Activated CD4-positive, alpha-beta T cell treated with anti-CD3 and anti-CD28 coated beads, Interleukin-2, amount 10 ng/mL, durations not matched to agents 24 days and 14 days (primary cell): ENCODE measurements at regions of chr2 and their contacts with region 1.

Region 1: GRCh38 chr2:65064728-65065552 is 8.7 kb downstream of the CEP68 start:
- DNase-seq: peak; percentile 87
- H3K4me3 Mint-ChIP-seq: no peak overlapping the region
- H3K27ac Mint-ChIP-seq: peak overlapping the region; percentile 16
- H3K4me1 Mint-ChIP-seq: peaks cover 22% of the 10 kb centered on the region
- H3K27me3 Mint-ChIP-seq: no peaks in the 10 kb centered on the region

Region 2: DNA sequence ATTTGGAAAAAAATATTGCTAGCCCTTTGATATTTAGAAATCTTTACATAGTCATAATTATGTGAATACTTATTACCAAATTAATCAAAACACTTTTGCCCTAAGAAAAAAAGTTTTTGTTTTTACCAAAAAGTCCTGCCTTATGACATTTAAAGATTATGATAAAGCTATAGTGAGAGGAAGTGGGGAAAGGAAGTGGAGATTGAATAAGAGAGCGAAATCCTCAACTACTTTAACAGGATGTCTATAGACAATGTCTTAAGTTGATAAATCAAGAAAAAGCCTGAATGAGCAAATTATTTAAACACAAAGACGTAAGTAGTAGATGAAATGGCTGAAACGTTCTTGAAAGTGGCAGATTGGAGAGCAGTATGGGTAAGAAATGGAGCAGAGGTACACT is 1024.8 kb before region 1 on chr2:
- intact Hi-C with region 1: no loop called
- DNase-seq: no peak
- H3K4me3 Mint-ChIP-seq: peak overlapping the region; percentile 16
- H3K27ac Mint-ChIP-seq: peak overlapping the region; percentile 23
- H3K4me1 Mint-ChIP-seq: peaks cover 24% of the 10 kb centered on the region
- H3K27me3 Mint-ChIP-seq: no peaks in the 10 kb centered on the region

Region 3: GRCh38 chr2:65169760-65170136 is 104.8 kb after region 1 on chr2:
- intact Hi-C with region 1: loop called (anchors 1 kb)
- DNase-seq: no peak
- H3K4me3 Mint-ChIP-seq: no peak overlapping the region
- H3K27ac Mint-ChIP-seq: no peak overlapping the region
- H3K4me1 Mint-ChIP-seq: no peaks in the 10 kb centered on the region
- H3K27me3 Mint-ChIP-seq: peaks cover 6% of the 10 kb centered on the region

Region 4: GRCh38 chr2:65186872-65187851 is 122.2 kb after region 1 on chr2:
- intact Hi-C with region 1: loop called (anchors 1 kb)
- DNase-seq: peak; percentile 90
- H3K4me3 Mint-ChIP-seq: no peak overlapping the region
- H3K27ac Mint-ChIP-seq: no peak overlapping the region
- H3K4me1 Mint-ChIP-seq: peaks cover 9% of the 10 kb centered on the region
- H3K27me3 Mint-ChIP-seq: peaks cover 27% of the 10 kb centered on the region

Region 5: DNA sequence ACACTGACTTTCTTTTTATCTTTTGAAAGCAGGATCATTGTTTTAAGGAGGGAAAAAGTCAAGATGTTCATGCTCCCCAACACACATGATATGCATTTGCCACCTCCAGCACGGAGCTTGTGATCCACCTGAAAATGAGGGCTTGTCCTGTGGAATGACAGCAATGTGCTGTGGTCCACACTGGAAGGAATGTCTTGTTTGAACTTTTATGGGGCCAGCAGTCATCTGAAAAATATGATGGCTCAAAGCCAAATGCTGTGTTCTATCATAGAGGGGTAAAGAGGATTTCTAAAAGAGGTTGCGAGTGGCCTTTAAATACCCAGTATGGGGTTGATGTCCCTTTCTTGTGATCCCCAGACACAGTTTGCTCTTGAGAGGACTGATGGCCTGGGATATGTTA is 593.9 kb after region 1 on chr2:
- intact Hi-C with region 1: no loop called
- DNase-seq: no peak
- H3K4me3 Mint-ChIP-seq: no peak overlapping the region
- H3K27ac Mint-ChIP-seq: no peak overlapping the region
- H3K4me1 Mint-ChIP-seq: no peaks in the 10 kb centered on the region
- H3K27me3 Mint-ChIP-seq: peaks cover 6% of the 10 kb centered on the region